ENCODE measurements at regions of chr16 and their contacts with region 1.

Region 1: DNA sequence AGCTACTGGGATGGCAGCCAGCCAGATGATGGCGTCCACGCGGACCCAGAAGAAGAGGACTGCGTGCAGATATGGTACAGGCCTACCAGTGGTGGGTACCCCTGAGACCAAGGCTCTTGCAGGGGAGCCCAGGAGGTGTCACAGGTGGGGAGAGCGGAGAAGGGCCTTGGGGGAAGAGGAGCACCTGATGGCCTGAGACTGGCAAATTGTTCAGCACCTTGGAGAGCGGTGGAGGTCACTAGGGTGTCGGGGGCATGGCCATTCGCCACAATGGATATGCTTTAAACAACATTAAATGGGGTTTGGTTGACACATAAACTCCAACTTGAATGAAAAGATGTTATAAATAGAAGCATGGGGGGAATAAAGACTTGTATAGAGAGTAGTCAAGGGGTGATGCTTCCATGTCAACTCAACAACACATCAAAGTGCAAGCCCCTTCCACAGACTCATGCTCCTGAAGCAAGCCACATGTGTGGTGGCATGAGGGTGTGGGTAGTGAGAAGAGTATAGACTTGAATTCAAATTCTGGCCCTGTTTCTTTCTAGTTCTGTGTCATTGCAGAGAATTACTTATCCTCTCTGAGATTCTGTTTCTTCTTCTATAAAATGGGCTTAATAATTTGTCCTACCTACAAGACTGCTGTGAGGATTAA is 22.2 kb downstream of the CLEC19A start:
- DNase-seq: no peak
- H3K4me3 ChIP-seq: no peak overlapping the region
- H3K27ac ChIP-seq: no peak overlapping the region
- H3K4me1 ChIP-seq: no peaks in the 10 kb centered on the region
- H3K27me3 ChIP-seq: no peaks in the 10 kb centered on the region
- CTCF ChIP-seq: no peak
- EP300 ChIP-seq: no peak
- POLR2A ChIP-seq: no peak

Region 2: DNA sequence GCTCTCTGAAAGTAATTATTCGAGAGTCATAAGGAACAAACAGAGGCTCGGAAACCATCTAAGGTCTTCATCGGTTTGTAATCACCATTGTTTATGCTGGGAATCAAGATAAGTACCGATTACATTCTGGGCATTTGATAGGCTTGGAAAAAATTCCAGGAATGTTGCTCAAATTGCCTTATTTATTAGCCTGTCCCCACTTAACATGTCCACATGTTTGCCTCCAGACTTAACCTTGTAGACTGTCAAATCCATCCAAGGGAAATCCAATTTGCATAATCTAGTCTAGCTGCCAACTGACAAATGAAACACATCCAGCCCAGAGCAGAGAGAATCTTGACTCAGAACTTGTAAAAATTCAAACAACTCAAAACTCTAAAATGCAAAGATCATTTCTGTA is 58.7 kb after region 1 on chr16:
- intact Hi-C with region 1: loop called in 1 of 4 experiments (anchors 10 kb)
- DNase-seq: no peak
- H3K4me3 ChIP-seq: no peak overlapping the region
- H3K27ac ChIP-seq: no peak overlapping the region
- H3K4me1 ChIP-seq: no peaks in the 10 kb centered on the region
- H3K27me3 ChIP-seq: no peaks in the 10 kb centered on the region
- CTCF ChIP-seq: no peak
- EP300 ChIP-seq: no peak
- POLR2A ChIP-seq: no peak

Measured in ovary (tissue), 10 donors.